ENCODE measurements at regions of chr5 and their contacts with region 1.

Region 1: GRCh38 chr5:179732417-179732917 is at the start of gene MAML1:
- DNase-seq: peak; percentile 100
- ATAC-seq: peak; percentile 99
- total RNA-seq, gene MAML1: 10.4 TPM

Region 2: DNA sequence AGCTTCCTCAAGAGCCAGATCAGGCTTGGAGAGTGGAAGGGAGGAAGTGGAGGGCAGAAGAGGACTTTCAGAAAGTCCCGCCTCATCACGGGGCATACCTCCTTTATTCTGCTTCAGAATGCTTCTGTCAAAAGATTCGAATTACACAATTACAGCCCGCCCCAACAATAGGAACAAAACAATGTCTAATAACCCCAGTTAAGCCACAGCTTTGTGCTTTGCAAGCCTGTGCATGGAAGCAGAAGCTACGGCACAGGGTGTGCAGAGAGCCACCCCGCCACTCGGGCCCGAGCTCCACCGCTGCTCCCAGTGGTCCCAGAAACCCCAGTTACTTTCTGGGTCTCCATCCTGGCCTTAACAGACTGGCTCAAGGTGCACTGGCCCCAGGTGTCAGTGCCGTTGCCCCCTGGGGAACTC is 132.5 kb before region 1 on chr5:
- intact Hi-C with region 1: no loop called
- DNase-seq: no peak
- ATAC-seq: no peak

Region 3: DNA sequence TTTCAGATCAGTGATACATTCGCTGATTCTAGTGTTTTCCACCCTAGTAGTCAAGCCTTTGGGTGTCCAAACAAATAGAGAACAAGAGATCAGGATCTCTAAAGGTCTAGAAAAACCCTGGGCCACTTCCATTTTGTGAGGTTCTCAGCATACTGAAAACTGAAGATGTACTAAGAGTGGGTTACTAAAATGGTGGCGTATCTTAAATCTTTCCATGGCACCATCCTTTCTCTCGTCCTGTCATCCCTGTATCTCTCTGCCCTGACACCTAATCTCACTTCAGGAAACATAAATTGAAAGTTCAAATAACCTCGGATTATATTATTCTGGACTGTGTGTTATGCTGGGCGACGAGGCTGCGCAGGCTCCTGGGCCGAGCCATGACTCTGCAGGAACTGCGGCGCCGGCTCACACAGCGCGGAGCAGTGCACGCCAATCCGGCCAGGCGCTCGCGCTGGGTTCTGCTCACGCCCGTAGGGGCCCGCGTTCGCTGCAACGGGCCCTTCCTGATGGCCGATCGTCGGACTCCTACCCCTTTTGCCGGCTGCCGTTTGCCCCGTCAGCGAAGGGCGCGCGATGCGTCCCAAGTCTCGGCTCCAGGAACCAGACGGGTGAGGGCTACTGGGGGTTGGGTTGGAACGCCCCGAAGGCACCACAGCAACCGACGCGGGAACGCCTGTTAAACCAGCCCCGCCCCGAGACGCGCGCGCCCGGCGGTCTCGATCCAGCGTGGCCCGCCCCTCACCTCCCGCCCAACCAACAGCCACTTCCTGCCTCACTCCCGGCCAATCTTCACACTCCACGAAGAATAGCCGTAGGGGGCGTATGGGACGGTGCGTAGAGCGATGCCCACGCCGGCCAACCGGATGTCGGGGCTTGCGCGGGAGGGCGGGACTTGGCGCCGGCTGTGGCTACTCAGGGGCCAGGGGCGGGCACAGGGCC is 34.2 kb before region 1 on chr5:
- intact Hi-C with region 1: loop called (anchors 5 kb)
- DNase-seq: peak; percentile 99
- ATAC-seq: peak; percentile 97

Region 4: DNA sequence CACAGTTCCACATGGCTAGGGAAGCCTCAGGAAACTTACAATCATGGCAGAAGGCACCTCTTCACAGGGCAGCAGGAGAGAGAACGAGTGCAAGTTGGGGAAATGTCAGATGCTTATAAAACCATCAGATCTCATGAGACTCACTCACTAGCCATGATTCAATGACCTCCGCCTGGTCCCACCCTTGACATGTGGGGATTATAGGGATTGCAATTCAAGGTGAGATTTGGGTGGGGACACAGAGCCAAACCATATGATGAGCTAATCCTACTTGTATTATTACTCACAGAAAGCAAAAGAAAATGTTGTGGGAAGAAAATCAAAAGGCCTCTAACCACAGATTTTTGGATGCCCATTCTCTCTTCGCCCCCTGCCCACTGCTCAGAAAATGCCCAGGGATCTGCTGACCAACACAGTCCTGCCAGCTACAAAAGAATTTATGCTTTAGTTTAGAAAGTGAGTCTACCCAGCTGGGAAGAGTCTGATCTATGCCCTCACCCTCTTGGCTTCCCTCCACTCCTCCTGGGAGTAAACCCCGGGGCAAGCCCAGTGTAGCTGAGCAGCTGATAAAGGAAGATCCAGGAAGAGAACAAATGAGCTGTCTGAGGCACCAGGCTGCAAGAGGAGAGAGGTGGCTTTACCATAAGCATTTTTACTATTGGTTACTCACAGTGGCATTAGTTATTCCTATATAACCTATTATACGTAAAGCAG is 286.0 kb after region 1 on chr5:
- intact Hi-C with region 1: no loop called
- DNase-seq: no peak
- ATAC-seq: no peak

Measured in Right ventricle myocardium superior (tissue), 1 donor.